Heart right ventricle (tissue), 16 donors: ENCODE measurements at regions of chr22 and their contacts with region 1.

Region 1: GRCh38 chr22:33379836-33380235 is 321.7 kb upstream of the SYN3 start:
- DNase-seq: no peak
- ATAC-seq: no peak
- H3K4me3 ChIP-seq: no peak overlapping the region
- H3K27ac ChIP-seq: no peak overlapping the region
- H3K4me1 ChIP-seq: no peaks in the 10 kb centered on the region
- H3K27me3 ChIP-seq: no peaks in the 10 kb centered on the region
- CTCF ChIP-seq: no peak

Region 2: GRCh38 chr22:33350391-33350955 is 29.4 kb before region 1 on chr22:
- intact Hi-C with region 1: no loop called
- DNase-seq: no peak
- ATAC-seq: no peak
- H3K4me3 ChIP-seq: no peak overlapping the region
- H3K27ac ChIP-seq: no peak overlapping the region
- H3K4me1 ChIP-seq: peaks cover 0 to 18% (median 3%) of the 10 kb centered on the region in 9 donors
- H3K27me3 ChIP-seq: no peaks in the 10 kb centered on the region
- CTCF ChIP-seq: no peak

Region 3: GRCh38 chr22:33418484-33418883 is 38.6 kb after region 1 on chr22:
- intact Hi-C with region 1: no loop called
- DNase-seq: no peak
- ATAC-seq: peak in 1 of 8 donors; percentile 34
- H3K4me3 ChIP-seq: no peak overlapping the region
- H3K27ac ChIP-seq: no peak overlapping the region
- H3K4me1 ChIP-seq: peaks cover 0 to 9% (median 0%) of the 10 kb centered on the region in 9 donors
- H3K27me3 ChIP-seq: no peaks in the 10 kb centered on the region
- CTCF ChIP-seq: no peak

Region 4: DNA sequence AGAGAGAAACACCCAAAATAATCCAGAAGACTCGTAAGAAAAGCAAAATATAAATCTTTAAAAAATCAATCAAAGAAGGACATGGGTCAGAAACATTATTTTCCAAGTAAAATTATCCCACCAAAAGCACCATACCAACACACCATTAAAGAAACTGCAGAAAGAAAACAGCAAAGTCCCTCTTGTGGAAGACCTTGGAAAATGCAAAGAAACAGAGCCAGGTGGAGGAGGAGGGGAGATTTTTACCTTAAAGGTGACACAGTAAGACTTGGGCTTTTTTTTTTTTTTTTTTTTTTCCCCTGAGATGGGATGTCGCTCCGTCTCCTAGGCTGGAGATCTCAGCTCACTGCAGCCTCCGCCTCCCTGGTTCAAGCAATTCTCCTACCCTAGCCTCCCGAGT is 416.7 kb after region 1 on chr22:
- intact Hi-C with region 1: loop called in 1 of 10 experiments (anchors 10 kb)
- DNase-seq: no peak
- ATAC-seq: no peak
- H3K4me3 ChIP-seq: no peak overlapping the region
- H3K27ac ChIP-seq: no peak overlapping the region
- H3K4me1 ChIP-seq: peaks cover 0 to 33% (median 14%) of the 10 kb centered on the region in 9 donors
- H3K27me3 ChIP-seq: no peaks in the 10 kb centered on the region
- CTCF ChIP-seq: no peak